Posterior vena cava (tissue), 2 donors: ENCODE measurements at regions of chr10 and their contacts with region 1.

Region 1: GRCh38 chr10:63157845-63158624 is 24.9 kb downstream of the NRBF2 start:
- DNase-seq: no peak

Region 2: GRCh38 chr10:62582804-62583208 is 575.2 kb before region 1 on chr10:
- intact Hi-C with region 1: loop called in 1 of 2 experiments (anchors 10 kb)
- DNase-seq: peak; percentile 95

Region 3: DNA sequence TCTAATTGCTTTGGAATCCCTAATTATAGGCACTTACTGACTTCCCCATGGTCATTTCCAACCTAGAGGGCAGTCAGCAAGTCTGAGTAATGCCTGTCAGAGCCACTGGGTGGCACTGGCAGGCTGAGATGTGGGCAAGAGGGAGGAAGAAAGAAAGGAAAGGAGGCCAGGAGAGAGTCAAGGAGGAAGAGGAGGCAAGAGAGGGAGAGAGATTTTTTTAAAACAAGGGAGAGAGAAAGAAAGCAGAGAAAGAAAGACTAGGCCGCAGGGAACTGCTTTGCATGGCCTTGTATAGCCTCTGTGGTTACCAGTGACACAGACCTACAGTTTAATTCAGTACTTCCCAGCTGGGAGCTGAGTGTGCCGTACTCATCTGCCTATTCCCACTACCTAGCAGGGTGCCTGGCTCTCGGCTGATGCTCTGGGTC is 563.9 kb before region 1 on chr10:
- intact Hi-C with region 1: loop called (anchors 10 kb)
- DNase-seq: peak; percentile 86